Vagina (tissue), 2 donors: ENCODE measurements at regions of chr14 and their contacts with region 1.

Region 1: DNA sequence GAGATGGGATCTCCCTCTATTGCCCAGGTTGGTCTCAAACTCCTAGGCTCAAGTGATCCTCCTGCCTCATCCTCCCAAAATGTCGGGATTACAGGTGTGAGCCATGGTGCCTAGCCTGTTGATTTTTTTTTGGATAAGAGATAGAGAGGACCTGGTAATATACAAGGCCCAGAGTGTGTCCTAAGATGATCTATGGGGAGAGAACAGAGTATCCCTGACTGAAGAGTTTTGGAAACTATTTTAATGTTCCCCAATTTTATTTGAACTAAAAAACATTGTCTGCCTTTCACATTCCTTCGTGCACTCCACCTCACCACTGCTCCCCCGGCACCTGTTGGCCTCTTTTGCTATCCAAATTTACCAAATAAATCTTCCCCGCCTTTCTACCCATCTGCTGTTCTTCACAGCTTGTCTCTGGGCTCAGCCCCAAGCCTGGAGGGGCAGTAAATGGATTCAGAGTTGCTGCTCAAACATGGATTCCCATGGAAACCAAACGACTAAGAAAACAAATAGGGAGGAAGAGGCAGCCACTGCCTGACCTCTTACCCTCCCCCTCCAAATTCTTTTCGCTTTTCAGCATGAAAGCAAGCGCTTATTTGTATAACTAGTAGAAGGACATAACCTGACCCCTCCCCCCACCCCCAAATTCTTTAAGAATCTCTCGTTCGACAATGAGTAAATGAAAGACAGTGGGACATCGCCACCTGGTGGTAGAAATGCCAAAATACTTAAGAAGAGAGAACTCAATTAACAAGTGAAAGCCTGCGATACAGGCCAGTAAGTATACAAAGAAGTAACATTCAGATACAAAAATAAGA is 22.6 kb downstream of the OR10G3 start:
- DNase-seq: peak in 1 of 2 donors; percentile 88
- H3K4me3 ChIP-seq: peak overlapping the region; percentile 29 to 34
- H3K27ac ChIP-seq: peak overlapping the region; percentile 60
- H3K4me1 ChIP-seq: no peaks in the 10 kb centered on the region
- H3K27me3 ChIP-seq: no peaks in the 10 kb centered on the region
- CTCF ChIP-seq: peak; percentile 55 to 72 (median 55)
- POLR2A ChIP-seq: no peak

Region 2: GRCh38 chr14:21505012-21505553 is 52.2 kb before region 1 on chr14:
- intact Hi-C with region 1: loop called (anchors 10 kb)
- DNase-seq: no peak
- H3K4me3 ChIP-seq: no peak overlapping the region
- H3K27ac ChIP-seq: no peak overlapping the region
- H3K4me1 ChIP-seq: peaks cover 23% of the 10 kb centered on the region
- H3K27me3 ChIP-seq: no peaks in the 10 kb centered on the region
- CTCF ChIP-seq: no peak
- POLR2A ChIP-seq: no peak